Activated CD4-positive, alpha-beta T cell treated with anti-CD3 and anti-CD28 coated beads for 36 hours (primary cell): ENCODE measurements at regions of chr11 and their contacts with region 1.

Region 1: GRCh38 chr11:95231127-95231880 is at the start of gene SESN3:
- DNase-seq: peak; percentile 99
- ATAC-seq: peak; percentile 93
- H3K4me3 Mint-ChIP-seq: no peak within 1 kb of the TSS
- H3K27ac Mint-ChIP-seq: peak within 1 kb of the TSS; percentile 84
- H3K4me1 Mint-ChIP-seq: peaks cover 46% of the 10 kb centered on the region
- H3K27me3 Mint-ChIP-seq: no peaks in the 10 kb centered on the region
- total RNA-seq, gene SESN3: 8.4 to 12.3 TPM

Region 2: DNA sequence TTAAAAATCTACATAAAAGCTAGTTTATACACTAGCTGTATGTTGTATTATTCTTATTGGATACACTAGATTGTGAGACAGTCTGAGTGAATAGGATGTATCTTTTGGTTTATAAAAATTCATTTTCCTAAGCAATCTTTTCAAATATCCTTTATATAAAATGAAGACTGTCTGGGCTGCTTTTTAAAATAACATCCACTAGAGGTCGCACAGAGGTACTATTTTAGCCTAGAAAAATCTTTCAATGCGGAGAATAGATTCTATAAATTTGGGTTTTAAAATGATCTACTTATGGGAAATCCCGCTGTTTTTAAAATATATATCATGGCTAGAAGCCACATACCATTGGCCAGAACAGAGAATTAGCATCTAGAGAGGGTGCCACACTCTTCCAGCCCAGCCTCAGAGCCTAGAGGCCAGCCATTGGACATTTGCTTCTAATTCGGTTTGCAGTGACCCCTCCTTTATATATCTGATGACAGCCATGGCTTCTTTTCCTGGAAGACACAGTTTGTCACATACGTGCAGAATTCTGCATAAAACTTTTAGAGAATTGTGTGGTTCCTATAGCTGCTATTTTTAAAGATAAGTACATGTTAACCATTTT is 711.7 kb before region 1 on chr11:
- CTCF ChIA-PET with region 1: no interaction called
- POLR2A ChIA-PET with region 1: no interaction called
- intact Hi-C with region 1: no loop called
- DNase-seq: no peak
- ATAC-seq: peak; percentile 30
- H3K4me3 Mint-ChIP-seq: no peak overlapping the region
- H3K27ac Mint-ChIP-seq: no peak overlapping the region
- H3K4me1 Mint-ChIP-seq: no peaks in the 10 kb centered on the region
- H3K27me3 Mint-ChIP-seq: peaks cover 12% of the 10 kb centered on the region

Region 3: DNA sequence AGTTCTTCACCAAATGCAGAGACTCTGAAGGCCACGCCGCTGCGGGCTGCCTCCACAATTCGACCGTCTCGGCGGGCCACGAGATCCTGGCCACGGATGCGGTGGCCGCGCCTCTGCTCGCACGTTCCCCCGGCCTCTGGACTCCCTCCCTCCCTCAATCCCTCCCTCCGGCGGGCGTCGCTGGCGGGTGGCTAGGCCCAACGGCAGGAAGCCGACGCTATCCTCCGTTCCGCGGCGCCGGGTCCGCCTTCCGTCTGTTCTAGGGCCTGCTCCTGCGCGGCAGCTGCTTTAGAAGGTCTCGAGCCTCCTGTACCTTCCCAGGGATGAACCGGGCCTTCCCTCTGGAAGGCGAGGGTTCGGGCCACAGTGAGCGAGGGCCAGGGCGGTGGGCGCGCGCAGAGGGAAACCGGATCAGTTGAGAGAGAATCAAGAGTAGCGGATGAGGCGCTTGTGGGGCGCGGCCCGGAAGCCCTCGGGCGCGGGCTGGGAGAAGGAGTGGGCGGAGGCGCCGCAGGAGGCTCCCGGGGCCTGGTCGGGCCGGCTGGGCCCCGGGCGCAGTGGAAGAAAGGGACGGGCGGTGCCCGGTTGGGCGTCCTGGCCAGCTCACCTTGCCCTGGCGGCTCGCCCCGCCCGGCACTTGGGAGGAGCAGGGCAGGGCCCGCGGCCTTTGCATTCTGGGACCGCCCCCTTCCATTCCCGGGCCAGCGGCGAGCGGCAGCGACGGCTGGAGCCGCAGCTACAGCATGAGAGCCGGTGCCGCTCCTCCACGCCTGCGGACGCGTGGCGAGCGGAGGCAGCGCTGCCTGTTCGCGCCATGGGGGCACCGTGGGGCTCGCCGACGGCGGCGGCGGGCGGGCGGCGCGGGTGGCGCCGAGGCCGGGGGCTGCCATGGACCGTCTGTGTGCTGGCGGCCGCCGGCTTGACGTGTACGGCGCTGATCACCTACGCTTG is 687.3 kb before region 1 on chr11 and contains the start of gene FUT4:
- CTCF ChIA-PET with region 1: no interaction called
- POLR2A ChIA-PET with region 1: no interaction called
- intact Hi-C with region 1: loop called in 1 of 2 experiments (anchors 5 kb)
- DNase-seq: peak; percentile 87
- ATAC-seq: peak; percentile 83
- H3K4me3 Mint-ChIP-seq: peak within 1 kb of the TSS; percentile 92
- H3K27ac Mint-ChIP-seq: peak within 1 kb of the TSS; percentile 99
- H3K4me1 Mint-ChIP-seq: peaks cover 39% of the 10 kb centered on the region
- H3K27me3 Mint-ChIP-seq: no peaks in the 10 kb centered on the region
- total RNA-seq, gene FUT4: 4.4 to 4.9 TPM

Region 4: GRCh38 chr11:95044010-95044409 is 187.3 kb before region 1 on chr11:
- CTCF ChIA-PET with region 1: no interaction called
- POLR2A ChIA-PET with region 1: no interaction called
- intact Hi-C with region 1: no loop called
- DNase-seq: no peak
- ATAC-seq: no peak
- H3K4me3 Mint-ChIP-seq: no peak overlapping the region
- H3K27ac Mint-ChIP-seq: no peak overlapping the region
- H3K4me1 Mint-ChIP-seq: no peaks in the 10 kb centered on the region
- H3K27me3 Mint-ChIP-seq: peaks cover 15% of the 10 kb centered on the region

Region 5: GRCh38 chr11:95089620-95090542 is 141.4 kb before region 1 on chr11 and contains the start of gene ENDOD1:
- CTCF ChIA-PET with region 1: interaction called, 4 read pairs
- POLR2A ChIA-PET with region 1: interaction called, 3 read pairs
- intact Hi-C with region 1: loop called in 1 of 2 experiments (anchors 2 kb)
- DNase-seq: peak; percentile 91
- ATAC-seq: peak; percentile 91
- H3K4me3 Mint-ChIP-seq: peak within 1 kb of the TSS; percentile 84
- H3K27ac Mint-ChIP-seq: peak within 1 kb of the TSS; percentile 96
- H3K4me1 Mint-ChIP-seq: peaks cover 61% of the 10 kb centered on the region
- H3K27me3 Mint-ChIP-seq: no peaks in the 10 kb centered on the region
- total RNA-seq, gene ENDOD1: 11.1 to 13.1 TPM

Region 6: DNA sequence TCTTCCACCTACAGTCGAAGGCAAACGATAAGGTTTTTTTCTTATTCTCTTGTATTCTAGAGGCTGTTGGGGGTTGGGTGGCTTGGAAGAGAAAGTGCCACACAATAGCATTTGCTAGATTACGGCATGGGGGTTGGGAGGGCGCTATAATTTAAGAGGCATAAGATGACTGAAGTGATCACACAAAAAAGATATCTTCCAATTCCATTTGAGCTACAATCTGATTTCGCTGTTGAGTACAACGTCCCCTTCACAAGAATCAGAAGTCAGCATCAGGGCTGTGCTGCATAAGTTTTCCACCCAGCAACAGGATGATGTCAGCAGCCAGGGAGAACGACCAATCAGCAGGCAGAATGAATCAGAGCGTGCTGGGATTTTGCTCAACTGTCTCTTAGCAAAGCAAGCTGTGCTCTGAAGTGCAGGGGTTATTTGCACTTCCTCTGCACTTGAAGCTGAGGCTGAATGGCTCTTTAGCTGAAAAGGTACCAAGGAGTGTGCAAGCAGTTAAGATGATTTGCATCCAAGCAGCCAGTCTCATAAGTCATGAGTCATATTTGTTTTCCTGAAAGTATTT is 22.9 kb after region 1 on chr11:
- CTCF ChIA-PET with region 1: interaction called, 12 read pairs
- POLR2A ChIA-PET with region 1: interaction called, 14 read pairs
- intact Hi-C with region 1: loop called (anchors 1 kb)
- DNase-seq: peak; percentile 89
- ATAC-seq: peak; percentile 99
- H3K4me3 Mint-ChIP-seq: peak overlapping the region; percentile 79
- H3K27ac Mint-ChIP-seq: peak overlapping the region; percentile 95
- H3K4me1 Mint-ChIP-seq: peaks cover 46% of the 10 kb centered on the region
- H3K27me3 Mint-ChIP-seq: no peaks in the 10 kb centered on the region

Region 7: DNA sequence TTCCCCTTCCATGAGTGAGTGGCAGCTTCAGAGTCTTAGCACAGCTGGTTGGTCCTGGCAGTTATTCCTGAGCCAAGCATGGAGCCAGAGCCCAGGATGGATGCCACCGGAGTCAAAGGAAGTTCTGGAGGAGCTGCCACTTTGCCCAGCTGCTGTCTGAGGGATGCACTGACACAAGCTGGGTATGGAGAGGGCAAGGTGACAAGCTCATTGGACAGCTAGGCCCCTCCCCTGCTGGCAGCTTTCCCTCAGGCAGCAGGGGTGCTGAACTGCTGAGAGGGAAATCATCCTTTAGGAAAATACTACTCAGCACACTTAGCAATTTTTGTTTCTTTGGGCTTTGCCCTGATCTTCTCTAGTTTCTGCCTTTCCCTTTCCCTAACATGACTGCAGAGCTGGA is 99.0 kb after region 1 on chr11:
- CTCF ChIA-PET with region 1: no interaction called
- POLR2A ChIA-PET with region 1: no interaction called
- intact Hi-C with region 1: no loop called
- DNase-seq: no peak
- ATAC-seq: no peak
- H3K4me3 Mint-ChIP-seq: no peak overlapping the region
- H3K27ac Mint-ChIP-seq: no peak overlapping the region
- H3K4me1 Mint-ChIP-seq: peaks cover 16% of the 10 kb centered on the region
- H3K27me3 Mint-ChIP-seq: peaks cover 2% of the 10 kb centered on the region

Region 8: GRCh38 chr11:95688580-95689189 is 457.4 kb after region 1 on chr11:
- CTCF ChIA-PET with region 1: no interaction called
- POLR2A ChIA-PET with region 1: no interaction called
- intact Hi-C with region 1: loop called in 1 of 2 experiments (anchors 1 kb)
- DNase-seq: no peak
- ATAC-seq: peak; percentile 77
- H3K4me3 Mint-ChIP-seq: peak overlapping the region; percentile 9
- H3K27ac Mint-ChIP-seq: no peak overlapping the region
- H3K4me1 Mint-ChIP-seq: peaks cover 24% of the 10 kb centered on the region
- H3K27me3 Mint-ChIP-seq: no peaks in the 10 kb centered on the region

Region 9: GRCh38 chr11:95790123-95790932 is 559.0 kb after region 1 on chr11 and contains the start of gene CEP57:
- CTCF ChIA-PET with region 1: interaction called, 5 read pairs
- POLR2A ChIA-PET with region 1: interaction called, 6 read pairs
- intact Hi-C with region 1: loop called (anchors 1 kb)
- DNase-seq: peak; percentile 98
- ATAC-seq: peak; percentile 67
- H3K4me3 Mint-ChIP-seq: peak within 1 kb of the TSS; percentile 99
- H3K27ac Mint-ChIP-seq: peak within 1 kb of the TSS; percentile 100
- H3K4me1 Mint-ChIP-seq: peaks cover 53% of the 10 kb centered on the region
- H3K27me3 Mint-ChIP-seq: no peaks in the 10 kb centered on the region
- total RNA-seq, gene CEP57: 101 to 134 TPM